ENCODE measurements at regions of chr19 and their contacts with region 1.

Region 1: DNA sequence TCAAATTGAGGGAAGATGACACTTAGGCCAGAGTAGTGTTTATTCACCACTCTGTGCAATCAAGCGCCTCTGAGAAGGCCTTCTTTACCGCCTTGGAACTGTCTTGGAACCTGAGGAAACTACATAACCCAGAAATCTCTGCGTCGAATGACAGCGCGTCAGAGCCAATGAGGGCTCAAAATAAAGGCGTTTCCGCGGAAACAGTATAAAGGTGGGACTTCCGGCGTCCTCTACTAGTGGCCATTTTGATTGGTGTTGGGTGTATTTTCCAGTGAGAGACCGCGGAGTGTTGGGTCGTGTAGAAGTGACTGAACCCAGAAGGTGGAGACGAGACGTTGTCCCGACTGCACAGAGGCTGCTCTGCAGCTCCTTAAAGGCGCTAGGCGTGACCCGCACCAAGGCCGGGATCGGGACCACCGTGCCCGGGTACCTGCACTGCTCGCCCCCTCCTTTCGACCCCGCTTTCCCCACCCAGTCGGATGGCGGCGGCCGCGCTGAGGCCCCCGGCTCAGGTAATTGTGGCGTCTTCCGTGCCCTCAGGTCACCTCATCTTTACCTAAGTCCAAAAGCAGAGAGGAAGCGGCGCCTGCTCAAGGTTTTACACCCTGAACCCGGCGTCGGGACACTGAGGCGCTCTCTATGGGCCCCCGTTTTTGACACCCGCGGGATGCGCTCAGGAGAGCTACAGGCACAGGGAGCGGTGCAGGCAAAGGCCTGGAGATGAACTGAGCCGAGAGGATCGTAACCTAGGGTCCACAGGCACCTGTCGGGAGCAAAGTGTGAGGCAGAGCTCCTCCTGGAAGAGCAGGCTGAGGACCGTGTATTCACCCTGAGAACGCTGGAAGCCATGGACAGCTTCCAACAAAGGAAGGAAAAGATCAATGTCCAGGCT is at the start of gene ZNF776:
- DNase-seq: peak; percentile 82
- H3K4me3 Mint-ChIP-seq: peak within 1 kb of the TSS; percentile 100
- H3K27ac Mint-ChIP-seq: peak within 1 kb of the TSS; percentile 99
- H3K4me1 Mint-ChIP-seq: peaks cover 11% of the 10 kb centered on the region
- H3K27me3 Mint-ChIP-seq: no peaks in the 10 kb centered on the region
- CTCF ChIP-seq: no peak
- total RNA-seq, gene ZNF776: 19.7 and 21.6 TPM in 2 replicates

Region 2: GRCh38 chr19:57814505-57815251 is 67.9 kb after region 1 on chr19 and contains the start of gene ZNF552:
- CTCF ChIA-PET with region 1: no interaction called
- intact Hi-C with region 1: no loop called
- DNase-seq: peak; percentile 86
- H3K4me3 Mint-ChIP-seq: peak within 1 kb of the TSS; percentile 90
- H3K27ac Mint-ChIP-seq: peak within 1 kb of the TSS; percentile 98
- H3K4me1 Mint-ChIP-seq: peaks cover 50% of the 10 kb centered on the region
- H3K27me3 Mint-ChIP-seq: no peaks in the 10 kb centered on the region
- CTCF ChIP-seq: no peak
- total RNA-seq, gene ZNF552: 24.0 and 24.8 TPM in 2 replicates

Region 3: GRCh38 chr19:58154679-58155648 is 408.1 kb after region 1 on chr19:
- CTCF ChIA-PET with region 1: no interaction called
- intact Hi-C with region 1: loop called (anchors 5 kb)
- DNase-seq: peak; percentile 99
- H3K4me3 Mint-ChIP-seq: peak overlapping the region; percentile 82
- H3K27ac Mint-ChIP-seq: peak overlapping the region; percentile 54
- H3K4me1 Mint-ChIP-seq: peaks cover 18% of the 10 kb centered on the region
- H3K27me3 Mint-ChIP-seq: no peaks in the 10 kb centered on the region
- CTCF ChIP-seq: peak; percentile 97

Measured in Calu3 (cell line).